ENCODE measurements at regions of chr11 and their contacts with region 1.

Region 1: GRCh38 chr11:1628506-1629325 is 859 bp upstream of the KRTAP5-5 start:
- DNase-seq: peak; percentile 21
- ATAC-seq: peak; percentile 95
- H3K4me3 ChIP-seq: no peak overlapping the region
- H3K27ac ChIP-seq: no peak overlapping the region
- H3K4me1 ChIP-seq: no peaks in the 10 kb centered on the region
- H3K27me3 ChIP-seq: peaks cover 15 to 77% of the 10 kb centered on the region in 2 experiments
- CTCF ChIP-seq: peak; percentile 95
- EP300 ChIP-seq: no peak
- POLR2A ChIP-seq: no peak
- RAD21 ChIP-seq: peak; percentile 58; the same call in 1 of the 2 replicates

Region 2: GRCh38 chr11:1546536-1547400 is 81.9 kb before region 1 on chr11:
- CTCF ChIA-PET with region 1: interaction called, 6 read pairs
- POLR2A ChIA-PET with region 1: no interaction called
- in situ Hi-C with region 1: no loop called
- intact Hi-C with region 1: loop called (anchors 5 kb)
- DNase-seq: no peak
- ATAC-seq: peak; percentile 59
- H3K4me3 ChIP-seq: peak overlapping the region; percentile 3 to 63 (median 40); a peak in 4 of 6 replicates
- H3K27ac ChIP-seq: no peak overlapping the region
- H3K4me1 ChIP-seq: peaks cover 9% of the 10 kb centered on the region
- H3K27me3 ChIP-seq: peaks cover 34 to 67% of the 10 kb centered on the region in 2 experiments; a peak in 4 of 5 replicates
- CTCF ChIP-seq: peak; percentile 71
- EP300 ChIP-seq: no peak
- POLR2A ChIP-seq: no peak
- RAD21 ChIP-seq: peak; percentile 88

Region 3: GRCh38 chr11:1574238-1574932 is 54.3 kb before region 1 on chr11:
- CTCF ChIA-PET with region 1: no interaction called
- POLR2A ChIA-PET with region 1: no interaction called
- in situ Hi-C with region 1: no loop called
- intact Hi-C with region 1: no loop called
- DNase-seq: no peak
- ATAC-seq: peak; percentile 60
- H3K4me3 ChIP-seq: peak overlapping the region; percentile 65 to 76 (median 72)
- H3K27ac ChIP-seq: no peak overlapping the region
- H3K4me1 ChIP-seq: peaks cover 35% of the 10 kb centered on the region
- H3K27me3 ChIP-seq: peaks cover 1 to 17% of the 10 kb centered on the region in 2 experiments; a peak in 3 of 5 replicates
- CTCF ChIP-seq: peak; percentile 71
- EP300 ChIP-seq: no peak
- POLR2A ChIP-seq: no peak
- RAD21 ChIP-seq: peak; percentile 94

Region 4: GRCh38 chr11:1597331-1598325 is 31.1 kb before region 1 on chr11 and contains the start of gene KRTAP5-2:
- CTCF ChIA-PET with region 1: interaction called, 13 read pairs
- POLR2A ChIA-PET with region 1: no interaction called
- in situ Hi-C with region 1: no loop called
- intact Hi-C with region 1: no loop called
- DNase-seq: no peak
- ATAC-seq: no peak
- H3K4me3 ChIP-seq: no peak within 1 kb of the TSS
- H3K27ac ChIP-seq: no peak within 1 kb of the TSS
- H3K4me1 ChIP-seq: peaks cover 11% of the 10 kb centered on the region
- H3K27me3 ChIP-seq: peaks cover 0 to 22% of the 10 kb centered on the region in 2 experiments; a peak in 3 of 5 replicates
- CTCF ChIP-seq: no peak
- EP300 ChIP-seq: no peak
- POLR2A ChIP-seq: no peak
- RAD21 ChIP-seq: no peak
- total RNA-seq, gene KRTAP5-2: not detected in 2 replicates